ENCODE measurements at regions of chr1 and their contacts with region 1.

Region 1: GRCh38 chr1:181166377-181167196 is 78.1 kb downstream of the IER5 start:
- DNase-seq: peak; percentile 12
- H3K4me3 ChIP-seq: no peak overlapping the region
- CTCF ChIP-seq: peak; percentile 78

Region 2: GRCh38 chr1:181105134-181106021 is 61.2 kb before region 1 on chr1:
- CTCF ChIA-PET with region 1: no interaction called
- POLR2A ChIA-PET with region 1: no interaction called
- DNase-seq: no peak
- H3K4me3 ChIP-seq: peak overlapping the region; percentile 76
- CTCF ChIP-seq: no peak

Region 3: GRCh38 chr1:181152892-181153633 is 13.5 kb before region 1 on chr1:
- CTCF ChIA-PET with region 1: interaction called, 23 read pairs
- POLR2A ChIA-PET with region 1: no interaction called
- DNase-seq: peak; percentile 34
- H3K4me3 ChIP-seq: no peak overlapping the region
- CTCF ChIP-seq: no peak

Measured in AG04449 (cell line).